Body of pancreas (tissue), 4 donors: ENCODE measurements at regions of chr9 and their contacts with region 1.

Region 1: DNA sequence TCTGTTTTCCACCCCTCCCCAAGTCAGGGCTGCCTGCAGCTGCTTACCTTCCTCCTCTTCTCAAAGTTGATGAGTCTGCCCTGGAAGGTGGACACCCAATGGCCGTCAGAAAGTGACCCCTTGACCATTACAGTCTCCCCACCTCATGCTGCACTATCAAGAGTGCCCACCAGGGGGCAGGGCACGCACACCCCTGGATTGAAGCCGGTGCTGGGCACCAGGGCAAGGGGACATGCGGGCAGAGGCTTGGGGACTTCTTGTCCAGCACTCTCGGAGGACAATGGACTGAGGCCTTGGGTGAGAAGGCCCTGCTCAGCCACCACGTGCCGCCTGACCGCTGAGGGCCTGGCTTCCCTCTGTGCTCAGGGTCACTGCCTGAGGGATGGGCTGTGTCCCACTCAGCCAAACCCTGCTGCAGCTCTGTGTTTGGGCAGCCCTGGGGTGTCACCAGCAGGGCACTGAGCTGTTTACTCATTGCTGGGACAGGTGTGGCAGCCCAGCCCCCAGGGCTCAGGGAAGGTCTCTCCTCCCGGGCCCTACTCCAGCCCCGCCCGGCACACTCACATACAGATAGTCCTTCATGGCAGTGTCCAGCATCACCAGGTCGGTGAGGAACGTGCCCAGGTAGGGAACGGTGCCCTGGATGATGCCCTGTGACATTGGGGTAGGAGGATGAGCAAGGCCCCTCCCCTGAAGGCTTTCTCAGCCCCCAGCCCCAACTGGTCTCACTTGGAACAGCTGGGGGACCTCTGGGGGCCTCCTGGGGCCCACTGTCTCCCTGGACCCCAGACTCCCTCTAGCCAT is 17.7 kb downstream of the RALGDS start:
- DNase-seq: peak; percentile 68 to 79 (median 75)
- ATAC-seq: peak; percentile 80
- H3K4me3 ChIP-seq: no peak overlapping the region
- H3K27ac ChIP-seq: no peak overlapping the region
- H3K4me1 ChIP-seq: peaks cover 4% of the 10 kb centered on the region
- H3K27me3 ChIP-seq: no peaks in the 10 kb centered on the region
- CTCF ChIP-seq: peak; percentile 81 to 97 (median 94)
- POLR2A ChIP-seq: no peak

Region 2: DNA sequence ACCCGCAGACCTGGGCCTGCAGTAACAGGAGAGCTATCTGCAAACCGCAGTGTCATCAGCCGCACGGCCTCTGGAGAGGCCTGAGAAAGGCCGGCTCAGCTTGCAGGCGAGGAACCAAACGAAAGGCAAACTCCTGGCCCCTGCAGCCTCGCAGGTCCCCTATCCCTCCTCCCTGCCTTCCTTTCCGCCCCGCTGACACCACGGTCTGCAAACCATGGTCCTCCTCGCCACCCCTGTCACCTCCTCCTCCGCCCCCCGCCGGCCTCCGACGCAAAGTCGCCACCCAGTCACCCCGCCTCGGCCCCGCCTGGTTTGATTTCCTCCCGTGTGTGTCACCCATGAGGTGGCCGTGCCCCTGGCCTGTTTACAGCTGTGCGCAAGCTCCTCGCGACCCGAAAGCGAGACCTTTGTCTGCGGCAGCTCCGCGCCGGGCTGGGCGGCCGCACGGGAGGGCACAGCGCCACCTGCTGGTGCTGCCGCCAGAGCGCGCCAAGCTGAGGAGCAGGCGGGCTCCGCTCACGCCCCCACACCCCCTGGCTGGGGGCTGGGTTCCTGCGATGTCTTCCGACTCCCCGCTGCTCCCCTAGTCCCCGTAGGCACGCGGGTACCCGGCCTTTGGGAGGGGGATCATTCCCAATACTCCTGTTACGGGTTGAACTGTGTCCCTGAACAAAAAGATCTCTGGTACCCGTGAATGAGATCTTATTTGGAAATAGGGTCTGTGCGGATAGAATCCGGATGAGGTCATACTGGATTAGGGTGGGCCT is 40.9 kb after region 1 on chr9:
- intact Hi-C with region 1: loop called (anchors 5 kb)
- DNase-seq: peak; percentile 72 to 86 (median 85)
- ATAC-seq: peak; percentile 9
- H3K4me3 ChIP-seq: no peak overlapping the region
- H3K27ac ChIP-seq: peak overlapping the region in 3 of 4 donors; percentile 39 to 55 (median 43)
- H3K4me1 ChIP-seq: peaks cover 71% of the 10 kb centered on the region
- H3K27me3 ChIP-seq: no peaks in the 10 kb centered on the region
- CTCF ChIP-seq: peak; percentile 94 to 99 (median 96)
- POLR2A ChIP-seq: peak in 1 of 3 donors; percentile 16